ENCODE measurements at regions of chr6 and their contacts with region 1.

Region 1: DNA sequence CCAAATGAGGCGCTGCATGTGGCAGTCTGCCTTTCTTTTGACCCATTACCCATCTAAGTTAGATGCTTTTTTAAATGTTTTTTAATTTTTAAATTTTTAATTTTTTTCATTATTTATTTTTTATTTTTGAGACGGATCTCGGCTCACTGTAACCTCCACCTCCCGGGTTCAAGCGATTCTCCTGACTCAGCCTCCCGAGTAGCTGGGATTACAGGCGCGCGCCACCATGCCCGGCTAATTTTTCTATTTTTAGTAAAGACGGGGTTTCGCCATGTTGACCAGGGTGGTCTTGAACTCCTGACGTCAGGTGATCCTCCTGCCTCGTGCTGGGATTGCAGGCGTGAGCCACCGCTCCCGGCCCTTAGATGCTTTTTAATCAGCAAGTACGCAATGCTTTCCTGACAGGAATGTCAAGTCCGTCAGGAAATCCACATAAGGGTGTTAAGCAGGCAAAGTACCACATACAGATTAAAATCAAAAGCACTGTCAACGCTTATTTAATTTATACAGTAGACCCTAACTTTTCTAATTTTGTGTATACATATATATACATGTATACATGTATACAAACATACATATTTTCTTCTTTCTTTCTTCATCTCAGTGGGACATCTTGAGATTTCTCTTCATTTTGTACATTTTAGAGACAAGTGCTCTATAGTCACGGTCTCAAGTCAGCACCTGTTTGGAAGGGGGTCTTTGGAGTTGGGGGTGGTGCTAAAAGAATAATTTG is 995 bp upstream of the GSTA4 start:
- DNase-seq: peak; percentile 74
- H3K4me3 ChIP-seq: peak overlapping the region; percentile 34
- H3K27ac ChIP-seq: peak overlapping the region; percentile 13
- H3K27me3 ChIP-seq: no peaks in the 10 kb centered on the region
- CTCF ChIP-seq: no peak

Region 2: GRCh38 chr6:52984247-52984646 is 11.8 kb before region 1 on chr6:
- CTCF ChIA-PET with region 1: interaction called, 18 read pairs
- POLR2A ChIA-PET with region 1: no interaction called
- DNase-seq: no peak
- H3K4me3 ChIP-seq: no peak overlapping the region
- H3K27ac ChIP-seq: no peak overlapping the region
- H3K27me3 ChIP-seq: no peaks in the 10 kb centered on the region
- CTCF ChIP-seq: no peak

Region 3: GRCh38 chr6:53033764-53034163 is 37.7 kb after region 1 on chr6:
- CTCF ChIA-PET with region 1: interaction called, 41 read pairs
- POLR2A ChIA-PET with region 1: interaction called, 7 read pairs
- DNase-seq: peak; percentile 68
- H3K4me3 ChIP-seq: no peak overlapping the region
- H3K27ac ChIP-seq: peak overlapping the region; percentile 69
- H3K27me3 ChIP-seq: no peaks in the 10 kb centered on the region
- CTCF ChIP-seq: no peak

Region 4: GRCh38 chr6:53042112-53042511 is 46.0 kb after region 1 on chr6:
- CTCF ChIA-PET with region 1: interaction called, 30 read pairs
- POLR2A ChIA-PET with region 1: interaction called, 7 read pairs
- DNase-seq: peak; percentile 79
- H3K4me3 ChIP-seq: no peak overlapping the region
- H3K27ac ChIP-seq: peak overlapping the region; percentile 79
- H3K27me3 ChIP-seq: no peaks in the 10 kb centered on the region
- CTCF ChIP-seq: no peak

Region 5: GRCh38 chr6:53056273-53056672 is 60.2 kb after region 1 on chr6:
- CTCF ChIA-PET with region 1: interaction called, 16 read pairs
- POLR2A ChIA-PET with region 1: no interaction called
- DNase-seq: no peak
- H3K4me3 ChIP-seq: no peak overlapping the region
- H3K27ac ChIP-seq: no peak overlapping the region
- H3K27me3 ChIP-seq: no peaks in the 10 kb centered on the region
- CTCF ChIP-seq: no peak

Region 6: GRCh38 chr6:53064726-53065215 is 68.7 kb after region 1 on chr6:
- CTCF ChIA-PET with region 1: interaction called, 45 read pairs
- POLR2A ChIA-PET with region 1: interaction called, 7 read pairs
- DNase-seq: peak; percentile 93
- H3K4me3 ChIP-seq: peak overlapping the region; percentile 76
- H3K27ac ChIP-seq: peak overlapping the region; percentile 54
- H3K27me3 ChIP-seq: no peaks in the 10 kb centered on the region
- CTCF ChIP-seq: no peak